ENCODE measurements at regions of chr12 and their contacts with region 1.

Region 1: DNA sequence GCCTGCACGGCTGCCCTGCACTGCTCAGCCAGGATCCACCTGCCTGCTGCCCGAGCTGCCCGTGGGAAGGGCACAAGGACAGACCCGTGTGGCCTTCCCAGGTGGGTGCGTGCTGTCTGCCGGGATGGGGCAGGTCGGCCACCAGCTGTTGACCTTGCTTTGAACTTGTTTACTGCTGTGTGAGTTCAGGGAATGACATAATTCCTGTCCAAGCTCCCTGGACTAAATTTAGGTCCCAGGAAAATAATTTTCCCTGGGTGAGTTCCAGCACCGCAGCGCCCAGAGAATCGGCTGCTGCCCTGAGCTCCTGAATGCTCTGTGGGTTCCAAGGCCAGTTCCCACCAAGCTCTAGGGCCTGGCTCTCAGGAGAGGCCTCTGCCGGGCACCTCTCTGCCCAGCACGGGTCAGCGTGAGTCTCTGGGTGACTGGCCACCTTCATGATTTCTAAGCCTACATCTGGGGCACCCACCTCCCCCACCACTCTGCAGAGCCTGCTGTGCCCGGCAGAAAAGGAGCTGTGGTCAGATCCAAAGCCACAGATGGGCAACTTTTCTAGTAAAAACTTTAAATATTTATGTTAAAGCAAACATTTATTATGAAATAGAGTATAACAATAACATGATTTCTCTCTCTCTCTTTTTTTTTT is 27.2 kb upstream of the MLXIP start:
- DNase-seq: peak; percentile 39
- H3K4me3 ChIP-seq: no peak overlapping the region
- H3K27ac ChIP-seq: no peak overlapping the region
- H3K4me1 ChIP-seq: no peaks in the 10 kb centered on the region
- H3K27me3 ChIP-seq: no peaks in the 10 kb centered on the region
- CTCF ChIP-seq: no peak
- POLR2A ChIP-seq: no peak

Region 2: DNA sequence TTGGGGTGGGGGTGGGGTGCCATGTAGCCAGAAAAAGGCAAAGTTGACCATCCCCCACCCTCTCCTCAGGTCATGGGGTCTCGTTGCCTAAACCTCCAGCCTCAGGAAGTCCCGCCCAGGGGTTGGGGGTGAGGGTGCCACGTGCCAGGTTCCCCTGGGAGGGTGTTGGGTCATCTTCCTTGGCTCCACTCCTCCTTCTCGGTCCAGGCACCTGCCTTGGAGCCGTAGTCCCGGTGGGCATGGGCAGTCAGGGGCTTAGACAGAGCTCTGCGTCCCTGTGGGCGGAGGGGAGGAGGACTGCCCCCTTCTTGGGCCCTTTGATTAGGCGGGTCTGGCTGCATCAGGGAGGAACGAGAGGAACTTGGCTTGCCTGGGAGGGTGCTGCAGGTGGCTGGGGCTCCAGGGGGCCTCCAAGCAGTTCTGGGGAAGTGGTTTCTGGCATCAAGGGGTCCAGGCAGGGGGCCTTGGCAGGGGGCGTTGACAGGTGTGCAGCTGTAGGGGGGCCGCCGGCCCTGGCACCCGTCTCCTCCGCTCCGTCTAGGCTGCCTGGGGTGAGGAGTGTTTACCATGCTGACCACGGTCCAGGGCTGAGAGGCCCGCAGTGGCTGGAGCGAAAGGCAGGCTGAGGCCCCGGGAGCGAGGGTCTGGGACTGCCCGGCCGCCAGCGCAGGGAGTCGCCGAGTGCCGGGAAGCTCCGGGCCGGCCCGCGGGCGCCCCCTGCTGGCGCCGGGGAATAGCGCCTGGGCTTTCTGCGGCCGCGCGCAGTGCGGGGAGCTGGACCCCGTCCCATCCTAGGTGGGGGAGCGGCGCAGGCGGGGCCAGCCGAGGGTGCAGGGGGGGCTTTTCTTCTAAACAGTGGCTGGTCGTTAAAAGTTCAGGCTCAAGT is 239.7 kb before region 1 on chr12:
- CTCF ChIA-PET with region 1: no interaction called
- POLR2A ChIA-PET with region 1: no interaction called
- dilution Hi-C with region 1: no loop called
- intact Hi-C with region 1: no loop called
- DNase-seq: peak; percentile 67
- H3K4me3 ChIP-seq: peak overlapping the region in 2 of 3 experiments; percentile 49
- H3K27ac ChIP-seq: no peak overlapping the region
- H3K4me1 ChIP-seq: peaks cover 27% of the 10 kb centered on the region
- H3K27me3 ChIP-seq: no peaks in the 10 kb centered on the region
- CTCF ChIP-seq: peak; percentile 89 to 94
- POLR2A ChIP-seq: no peak

Region 3: GRCh38 chr12:122064025-122064777 is 12.8 kb after region 1 on chr12:
- CTCF ChIA-PET with region 1: interaction called, 14 read pairs
- POLR2A ChIA-PET with region 1: no interaction called
- dilution Hi-C with region 1: no loop called
- intact Hi-C with region 1: no loop called
- DNase-seq: peak; percentile 95
- H3K4me3 ChIP-seq: no peak overlapping the region
- H3K27ac ChIP-seq: peak overlapping the region; percentile 60
- H3K4me1 ChIP-seq: peaks cover 37% of the 10 kb centered on the region
- H3K27me3 ChIP-seq: no peaks in the 10 kb centered on the region
- CTCF ChIP-seq: peak; percentile 48 to 57
- POLR2A ChIP-seq: peak; percentile 58

Region 4: DNA sequence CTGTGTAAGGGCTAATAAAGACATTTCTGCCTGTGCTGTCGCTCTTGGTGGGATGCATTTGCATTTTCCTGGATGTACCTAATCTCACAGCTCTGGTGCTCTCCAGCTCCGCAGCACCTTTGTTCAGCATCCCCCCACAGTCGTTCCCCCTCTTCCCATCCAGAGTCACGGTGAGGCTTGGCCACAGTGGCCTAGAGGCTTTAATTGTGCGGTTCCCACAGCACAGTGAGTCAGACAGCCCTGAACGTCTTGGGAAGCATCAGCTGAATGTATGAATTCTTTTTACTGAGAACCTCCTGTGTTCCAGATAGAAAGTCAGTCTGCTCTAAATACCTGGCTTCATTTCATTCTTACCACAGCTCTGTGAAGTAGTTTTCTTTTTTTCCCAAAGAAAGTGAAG is 55.9 kb after region 1 on chr12:
- CTCF ChIA-PET with region 1: interaction called, 14 read pairs
- POLR2A ChIA-PET with region 1: no interaction called
- dilution Hi-C with region 1: no loop called
- intact Hi-C with region 1: no loop called
- DNase-seq: no peak
- H3K4me3 ChIP-seq: no peak overlapping the region
- H3K27ac ChIP-seq: no peak overlapping the region
- H3K4me1 ChIP-seq: peaks cover 6% of the 10 kb centered on the region
- H3K27me3 ChIP-seq: no peaks in the 10 kb centered on the region
- CTCF ChIP-seq: no peak
- POLR2A ChIP-seq: no peak

Region 5: GRCh38 chr12:122123051-122123760 is 71.9 kb after region 1 on chr12:
- CTCF ChIA-PET with region 1: interaction called, 156 read pairs
- POLR2A ChIA-PET with region 1: no interaction called
- dilution Hi-C with region 1: no loop called
- intact Hi-C with region 1: loop called (anchors 1 kb)
- DNase-seq: peak; percentile 70
- H3K4me3 ChIP-seq: no peak overlapping the region
- H3K27ac ChIP-seq: no peak overlapping the region
- H3K4me1 ChIP-seq: peaks cover 6% of the 10 kb centered on the region
- H3K27me3 ChIP-seq: no peaks in the 10 kb centered on the region
- CTCF ChIP-seq: peak; percentile 65 to 67
- POLR2A ChIP-seq: no peak

Region 6: GRCh38 chr12:122130150-122130549 is 78.8 kb after region 1 on chr12:
- CTCF ChIA-PET with region 1: interaction called, 156 read pairs
- POLR2A ChIA-PET with region 1: no interaction called
- dilution Hi-C with region 1: no loop called
- intact Hi-C with region 1: loop called (anchors 2 kb)
- DNase-seq: no peak
- H3K4me3 ChIP-seq: no peak overlapping the region
- H3K27ac ChIP-seq: no peak overlapping the region
- H3K4me1 ChIP-seq: no peaks in the 10 kb centered on the region
- H3K27me3 ChIP-seq: no peaks in the 10 kb centered on the region
- CTCF ChIP-seq: no peak
- POLR2A ChIP-seq: no peak

Region 7: DNA sequence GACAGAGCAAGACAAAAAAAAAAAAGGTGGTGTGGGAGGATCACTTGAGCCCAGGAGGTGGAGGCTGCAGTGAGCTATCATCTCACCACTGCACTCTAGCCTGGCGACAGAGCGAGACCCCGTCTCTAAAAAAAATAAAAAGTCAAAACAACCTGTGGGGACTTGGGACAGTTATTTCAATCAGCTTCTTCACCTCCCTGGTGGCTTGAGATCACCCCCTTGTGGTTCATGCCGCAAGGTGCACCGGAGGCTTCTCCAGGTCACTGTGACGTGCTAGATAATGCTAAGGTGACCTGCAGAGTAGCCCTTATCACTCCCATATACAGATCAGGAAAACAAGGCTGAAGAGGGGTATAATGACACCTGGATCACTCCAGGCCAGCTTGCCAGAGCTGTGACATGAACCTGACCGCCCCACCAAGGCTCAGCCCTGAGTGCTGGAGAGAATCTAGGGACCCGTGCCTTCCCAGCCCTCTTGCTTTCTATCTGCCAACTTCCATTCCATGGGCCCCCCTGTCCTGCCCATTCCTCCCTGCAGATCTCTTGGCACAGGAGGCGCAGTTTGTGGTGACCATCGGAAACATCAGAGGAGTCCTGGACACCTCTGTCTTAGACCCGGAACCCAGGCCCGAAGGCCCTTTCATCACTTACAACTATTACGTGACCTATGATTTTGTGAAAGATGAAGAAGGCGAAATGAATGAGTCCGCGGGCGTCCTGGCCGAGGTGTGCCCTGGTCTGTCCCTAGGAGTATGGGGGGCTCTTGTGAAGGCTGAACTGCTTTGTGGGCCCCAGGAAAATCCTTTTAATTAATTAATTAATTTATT is 139.7 kb after region 1 on chr12:
- CTCF ChIA-PET with region 1: interaction called, 28 read pairs
- POLR2A ChIA-PET with region 1: no interaction called
- dilution Hi-C with region 1: no loop called
- intact Hi-C with region 1: loop called (anchors 1 kb)
- DNase-seq: peak; percentile 75
- H3K4me3 ChIP-seq: no peak overlapping the region
- H3K27ac ChIP-seq: no peak overlapping the region
- H3K4me1 ChIP-seq: no peaks in the 10 kb centered on the region
- H3K27me3 ChIP-seq: no peaks in the 10 kb centered on the region
- CTCF ChIP-seq: peak; percentile 78 to 86
- POLR2A ChIP-seq: no peak